CD8-positive, alpha-beta T cell (primary cell): ENCODE measurements at regions of chr5 and their contacts with region 1.

Region 1: DNA sequence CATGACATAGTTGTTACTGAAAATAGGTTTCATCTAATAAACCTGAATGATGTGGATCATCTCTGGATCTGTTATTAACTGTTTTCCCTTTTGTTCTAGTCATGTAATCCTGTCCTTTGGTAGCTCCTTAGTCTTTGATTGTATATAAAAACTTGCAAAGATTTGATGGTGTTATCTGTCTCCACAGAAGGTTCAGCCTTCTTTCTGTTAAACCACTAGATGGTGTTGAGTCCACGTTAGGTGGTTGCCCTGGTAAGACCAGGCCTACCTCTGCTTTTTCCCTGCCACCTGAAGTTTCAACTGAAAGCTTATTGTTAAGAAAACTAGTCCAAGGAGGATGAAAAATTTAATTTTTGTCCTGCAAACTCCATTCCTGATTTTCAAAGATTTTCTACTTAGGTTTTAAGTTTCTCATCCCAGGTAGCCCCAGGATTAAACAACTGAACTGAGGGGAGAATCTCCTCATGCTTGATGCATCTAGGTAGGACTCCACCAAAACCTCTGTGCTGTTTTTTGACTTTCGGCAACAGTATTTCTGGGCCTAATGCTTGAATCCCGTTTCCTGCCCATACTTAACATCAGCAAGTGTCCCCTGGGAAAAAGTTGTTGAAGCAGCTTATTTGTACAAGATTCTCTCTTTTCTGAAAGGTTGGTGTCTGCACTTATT is 68.5 kb downstream of the RICTOR start:
- DNase-seq: peak in 4 of 9 experiments; percentile 8 to 56 (median 34)
- ATAC-seq: peak; percentile 66
- H3K4me3 ChIP-seq: no peak overlapping the region
- H3K4me3 Mint-ChIP-seq: no peak overlapping the region
- H3K27ac ChIP-seq: no peak overlapping the region
- H3K27ac Mint-ChIP-seq: peak overlapping the region; percentile 11
- H3K4me1 ChIP-seq: peaks cover 11% of the 10 kb centered on the region
- H3K4me1 Mint-ChIP-seq: peaks cover 57% of the 10 kb centered on the region
- H3K27me3 ChIP-seq: no peaks in the 10 kb centered on the region
- H3K27me3 Mint-ChIP-seq: no peaks in the 10 kb centered on the region
- CTCF ChIP-seq: no peak

Region 2: DNA sequence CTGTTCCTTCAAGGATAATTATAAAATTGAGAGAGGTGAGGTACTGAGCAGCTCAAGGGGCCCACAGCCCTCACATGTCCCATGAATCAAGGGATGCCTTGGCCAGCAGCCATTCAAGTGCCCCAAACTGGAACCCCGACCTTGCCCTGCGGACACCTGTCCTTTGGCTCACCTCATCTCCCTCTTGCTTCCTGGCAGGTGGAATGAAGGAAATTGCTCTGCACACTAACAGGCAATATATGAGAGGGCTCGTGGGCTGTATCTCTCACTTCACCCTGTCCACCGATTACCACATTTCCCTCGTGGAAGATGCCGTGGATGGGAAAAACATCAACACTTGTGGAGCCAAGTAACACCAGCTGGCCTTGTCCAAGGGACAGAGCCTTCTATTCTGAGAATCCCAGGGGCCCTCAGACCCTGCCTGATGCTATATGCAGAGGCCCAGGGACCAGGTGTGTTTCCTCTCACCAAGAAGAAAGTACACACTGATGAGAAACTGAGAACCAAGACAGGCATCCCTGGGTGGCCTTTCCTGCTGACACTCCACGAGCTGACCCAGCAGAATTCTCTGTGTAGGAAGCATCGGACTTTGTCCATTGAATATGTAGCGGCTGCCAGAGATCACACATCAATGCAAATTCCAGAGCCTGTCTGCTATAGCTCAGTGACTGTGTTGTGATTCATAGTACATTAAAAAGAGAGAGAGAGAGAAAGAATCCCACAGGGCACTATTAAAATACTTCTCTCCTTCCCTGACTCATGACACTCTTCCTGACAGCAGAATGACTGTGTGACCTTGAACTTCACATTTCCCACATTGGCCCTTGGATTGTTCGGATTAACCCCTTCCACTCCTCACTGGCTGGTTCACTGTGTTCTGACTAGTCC is 541.8 kb before region 1 on chr5:
- CTCF ChIA-PET with region 1: no interaction called
- POLR2A ChIA-PET with region 1: interaction called, 10 read pairs
- intact Hi-C with region 1: no loop called
- DNase-seq: no peak
- ATAC-seq: no peak
- H3K4me3 ChIP-seq: no peak overlapping the region
- H3K4me3 Mint-ChIP-seq: no peak overlapping the region
- H3K27ac ChIP-seq: no peak overlapping the region
- H3K27ac Mint-ChIP-seq: no peak overlapping the region
- H3K4me1 ChIP-seq: no peaks in the 10 kb centered on the region
- H3K4me1 Mint-ChIP-seq: no peaks in the 10 kb centered on the region
- H3K27me3 ChIP-seq: peaks cover 11 to 13% of the 10 kb centered on the region in 2 experiments
- H3K27me3 Mint-ChIP-seq: peaks cover 42% of the 10 kb centered on the region
- CTCF ChIP-seq: no peak

Region 3: GRCh38 chr5:38961691-38962090 is 44.0 kb before region 1 on chr5:
- CTCF ChIA-PET with region 1: no interaction called
- POLR2A ChIA-PET with region 1: no interaction called
- intact Hi-C with region 1: loop called in 1 of 2 experiments (anchors 5 kb)
- DNase-seq: no peak
- ATAC-seq: no peak
- H3K4me3 ChIP-seq: no peak overlapping the region
- H3K4me3 Mint-ChIP-seq: no peak overlapping the region
- H3K27ac ChIP-seq: no peak overlapping the region
- H3K27ac Mint-ChIP-seq: no peak overlapping the region
- H3K4me1 ChIP-seq: no peaks in the 10 kb centered on the region
- H3K4me1 Mint-ChIP-seq: no peaks in the 10 kb centered on the region
- H3K27me3 ChIP-seq: no peaks in the 10 kb centered on the region
- H3K27me3 Mint-ChIP-seq: no peaks in the 10 kb centered on the region
- CTCF ChIP-seq: no peak

Region 4: GRCh38 chr5:39040875-39041274 is 35.2 kb after region 1 on chr5:
- CTCF ChIA-PET with region 1: no interaction called
- POLR2A ChIA-PET with region 1: no interaction called
- intact Hi-C with region 1: loop called in 1 of 2 experiments (anchors 5 kb)
- DNase-seq: peak in 3 of 9 experiments; percentile 20 to 39 (median 35)
- ATAC-seq: no peak
- H3K4me3 ChIP-seq: no peak overlapping the region
- H3K4me3 Mint-ChIP-seq: no peak overlapping the region
- H3K27ac ChIP-seq: no peak overlapping the region
- H3K27ac Mint-ChIP-seq: peak overlapping the region; percentile 2
- H3K4me1 ChIP-seq: peaks cover 5% of the 10 kb centered on the region
- H3K4me1 Mint-ChIP-seq: peaks cover 69% of the 10 kb centered on the region
- H3K27me3 ChIP-seq: no peaks in the 10 kb centered on the region
- H3K27me3 Mint-ChIP-seq: no peaks in the 10 kb centered on the region
- CTCF ChIP-seq: no peak

Region 5: DNA sequence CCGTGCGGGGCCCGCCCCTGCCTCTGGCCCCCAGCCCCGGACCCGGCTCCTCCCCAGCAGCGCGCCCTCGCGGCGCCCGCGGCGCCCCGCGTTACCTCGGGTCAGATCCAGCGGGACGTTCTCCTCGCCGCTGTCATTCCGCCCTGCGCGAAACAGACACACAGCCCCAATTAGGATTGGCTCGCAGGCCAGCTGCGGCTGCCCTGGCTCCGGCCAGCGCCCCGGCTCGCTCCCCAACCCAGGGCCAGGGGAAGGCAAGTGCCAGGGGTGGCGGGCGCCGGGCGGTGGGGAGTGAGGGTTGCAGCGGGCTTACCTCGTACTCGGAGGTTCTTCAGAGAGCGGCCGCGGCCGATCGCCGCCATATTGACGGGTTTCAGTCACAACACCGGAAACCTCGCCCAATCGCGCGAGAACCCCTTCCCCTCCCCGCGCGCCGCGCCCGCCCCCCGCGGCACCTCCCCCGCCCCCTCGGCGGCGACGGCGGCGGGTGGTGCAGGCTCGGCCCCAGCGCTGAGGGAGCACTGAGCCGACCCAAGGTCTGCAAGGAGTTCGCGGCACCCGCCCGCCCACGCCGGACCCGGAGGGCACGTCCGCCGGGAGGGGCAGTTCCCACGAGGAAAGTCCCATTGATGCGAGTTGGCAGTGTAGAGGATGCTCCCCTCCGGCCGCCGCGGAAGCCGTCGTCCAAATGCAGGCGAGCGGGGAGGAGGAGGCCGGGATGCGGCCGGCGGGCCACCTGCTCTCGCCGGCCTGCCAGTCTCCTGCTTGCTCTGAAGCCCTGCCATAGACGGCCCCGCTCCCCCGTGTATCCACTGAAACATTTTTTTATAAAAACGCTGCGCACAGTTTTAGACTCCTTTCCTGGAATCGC is 68.6 kb after region 1 on chr5 and contains the start of gene RICTOR:
- CTCF ChIA-PET with region 1: interaction called, 23 read pairs
- POLR2A ChIA-PET with region 1: no interaction called
- intact Hi-C with region 1: loop called in 1 of 2 experiments (anchors 5 kb)
- DNase-seq: peak; percentile 85 to 94 (median 91)
- ATAC-seq: peak; percentile 71
- H3K4me3 ChIP-seq: peak within 1 kb of the TSS; percentile 81 to 95
- H3K4me3 Mint-ChIP-seq: peak within 1 kb of the TSS; percentile 97
- H3K27ac ChIP-seq: peak within 1 kb of the TSS; percentile 92 to 94
- H3K27ac Mint-ChIP-seq: peak within 1 kb of the TSS; percentile 96
- H3K4me1 ChIP-seq: peaks cover 36% of the 10 kb centered on the region
- H3K4me1 Mint-ChIP-seq: peaks cover 46% of the 10 kb centered on the region
- H3K27me3 ChIP-seq: peaks cover 10 to 11% of the 10 kb centered on the region in 2 experiments
- H3K27me3 Mint-ChIP-seq: peaks cover 25% of the 10 kb centered on the region
- CTCF ChIP-seq: no peak
- total RNA-seq, gene RICTOR: 116 to 128 TPM

Region 6: DNA sequence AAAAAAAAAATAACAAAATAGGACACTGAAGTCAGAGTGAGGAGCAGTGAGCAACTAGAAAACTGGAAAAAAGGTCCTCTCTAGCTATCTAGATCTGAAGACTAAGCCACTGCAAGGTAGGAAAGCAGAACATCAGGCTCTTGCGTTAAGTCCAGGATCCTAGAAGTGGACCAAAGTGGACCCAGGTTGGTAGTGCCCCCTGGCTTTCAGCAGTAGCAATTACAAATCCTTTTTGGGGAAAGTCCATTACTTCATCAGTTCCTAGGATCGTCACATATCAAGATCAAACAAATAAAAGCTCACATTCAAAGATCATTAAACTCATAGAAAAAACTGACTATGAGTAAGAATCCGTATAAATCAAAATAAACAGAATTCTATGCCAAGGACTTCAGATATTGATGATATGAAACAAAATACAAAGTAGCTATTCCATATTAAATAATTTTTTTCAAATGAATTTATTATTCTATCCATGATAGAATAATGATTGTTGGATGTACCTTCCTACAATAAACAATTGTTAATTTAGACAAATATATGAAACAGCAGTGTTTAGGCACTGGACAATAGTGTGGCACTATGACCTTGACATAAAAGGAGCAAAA is 75.0 kb after region 1 on chr5:
- CTCF ChIA-PET with region 1: interaction called, 23 read pairs
- POLR2A ChIA-PET with region 1: interaction called, 3 read pairs
- intact Hi-C with region 1: no loop called
- DNase-seq: peak in 4 of 9 experiments; percentile 15 to 76 (median 46)
- ATAC-seq: peak; percentile 52
- H3K4me3 ChIP-seq: no peak overlapping the region
- H3K4me3 Mint-ChIP-seq: no peak overlapping the region
- H3K27ac ChIP-seq: no peak overlapping the region
- H3K27ac Mint-ChIP-seq: no peak overlapping the region
- H3K4me1 ChIP-seq: no peaks in the 10 kb centered on the region
- H3K4me1 Mint-ChIP-seq: peaks cover 7% of the 10 kb centered on the region
- H3K27me3 ChIP-seq: peaks cover 18 to 19% of the 10 kb centered on the region in 2 experiments
- H3K27me3 Mint-ChIP-seq: peaks cover 53% of the 10 kb centered on the region
- CTCF ChIP-seq: peak; percentile 69

Region 7: GRCh38 chr5:39547553-39548154 is 542.0 kb after region 1 on chr5:
- CTCF ChIA-PET with region 1: interaction called, 14 read pairs
- POLR2A ChIA-PET with region 1: no interaction called
- intact Hi-C with region 1: loop called (anchors 1 to 5 kb)
- DNase-seq: peak in 3 of 9 experiments; percentile 11 to 64 (median 45)
- ATAC-seq: peak; percentile 46
- H3K4me3 ChIP-seq: no peak overlapping the region
- H3K4me3 Mint-ChIP-seq: peak overlapping the region; percentile 43
- H3K27ac ChIP-seq: no peak overlapping the region
- H3K27ac Mint-ChIP-seq: no peak overlapping the region
- H3K4me1 ChIP-seq: no peaks in the 10 kb centered on the region
- H3K4me1 Mint-ChIP-seq: peaks cover 6% of the 10 kb centered on the region
- H3K27me3 ChIP-seq: no peaks in the 10 kb centered on the region
- H3K27me3 Mint-ChIP-seq: no peaks in the 10 kb centered on the region
- CTCF ChIP-seq: peak; percentile 72

Region 8: GRCh38 chr5:40191150-40191549 is 1185.5 kb after region 1 on chr5:
- CTCF ChIA-PET with region 1: no interaction called
- POLR2A ChIA-PET with region 1: no interaction called
- intact Hi-C with region 1: no loop called
- DNase-seq: no peak
- ATAC-seq: no peak
- H3K4me3 ChIP-seq: no peak overlapping the region
- H3K4me3 Mint-ChIP-seq: no peak overlapping the region
- H3K27ac ChIP-seq: no peak overlapping the region
- H3K27ac Mint-ChIP-seq: no peak overlapping the region
- H3K4me1 ChIP-seq: no peaks in the 10 kb centered on the region
- H3K4me1 Mint-ChIP-seq: no peaks in the 10 kb centered on the region
- H3K27me3 ChIP-seq: no peaks in the 10 kb centered on the region
- H3K27me3 Mint-ChIP-seq: no peaks in the 10 kb centered on the region
- CTCF ChIP-seq: no peak